BJ (cell line): ENCODE measurements at regions of chr4 and their contacts with region 1.

Region 1: DNA sequence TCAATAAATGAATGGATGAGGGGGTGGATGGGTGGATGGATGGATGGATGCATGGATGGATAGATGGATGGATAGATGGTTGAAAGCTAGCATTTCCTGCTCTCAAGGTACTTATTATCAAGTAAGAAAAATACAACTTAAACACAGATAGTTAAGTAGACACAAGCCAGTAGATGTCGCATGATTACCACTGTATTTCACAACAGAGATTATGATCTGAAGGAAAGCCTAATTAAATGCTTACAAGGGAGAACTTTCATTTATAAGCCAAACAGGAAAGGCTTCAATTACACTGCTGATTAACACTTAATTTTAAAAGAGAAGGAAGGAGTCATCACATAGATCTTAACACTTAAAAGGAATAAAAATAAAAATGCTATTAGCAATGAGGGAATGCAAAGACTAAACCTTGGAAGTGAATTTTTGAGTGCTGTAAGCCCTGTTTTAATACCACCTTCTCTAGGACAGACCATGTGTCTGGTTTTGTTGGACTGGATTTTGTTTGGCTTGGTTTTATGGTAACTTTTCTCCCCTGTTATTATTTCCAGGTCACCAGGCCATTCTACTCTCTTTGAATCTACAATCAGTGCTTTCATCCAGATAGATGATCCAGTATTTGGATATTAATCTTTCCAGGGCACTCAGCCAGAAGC is 75.4 kb upstream of the SLC39A8 start:
- DNase-seq: no peak
- H3K4me3 ChIP-seq: no peak overlapping the region
- H3K27me3 ChIP-seq: no peaks in the 10 kb centered on the region
- CTCF ChIP-seq: peak; percentile 33

Region 2: DNA sequence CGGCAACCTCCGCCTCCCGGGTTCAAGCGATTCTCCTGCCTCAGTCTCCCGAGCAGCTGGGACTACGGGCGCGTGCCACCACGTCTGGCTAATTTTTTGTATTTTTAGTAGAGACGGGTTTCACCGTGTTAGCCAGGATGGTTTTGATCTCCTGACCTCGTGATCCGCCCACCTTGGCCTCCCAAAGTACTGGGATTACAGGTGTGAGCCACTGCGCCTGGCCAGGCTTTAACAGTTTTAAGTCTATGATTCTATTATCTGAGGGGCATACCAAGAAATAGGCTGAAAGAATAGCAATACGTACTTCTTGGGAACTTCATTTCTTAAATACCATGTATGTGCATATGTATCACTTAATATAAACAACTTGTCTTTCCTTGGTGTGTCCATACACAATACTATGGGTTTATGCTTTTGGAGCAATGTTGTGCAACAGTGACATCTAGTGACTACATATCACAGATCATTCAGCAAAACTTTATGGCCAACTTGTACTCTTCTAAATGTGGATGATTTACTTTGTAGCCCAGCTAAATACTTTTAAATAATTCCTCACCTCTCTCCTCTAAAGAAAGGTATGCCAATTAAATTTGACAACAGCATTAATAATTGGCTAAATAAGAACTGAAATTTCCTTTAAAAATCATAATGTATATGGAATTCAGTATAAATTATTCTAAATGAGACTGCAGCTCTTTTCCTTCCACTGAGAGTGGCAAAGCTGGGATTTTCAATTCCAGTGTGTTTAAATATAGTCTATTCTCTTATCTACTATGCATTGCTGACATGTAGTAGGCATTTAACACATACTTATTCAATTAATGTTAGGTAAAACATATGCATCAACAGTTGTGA is 588.4 kb after region 1 on chr4:
- CTCF ChIA-PET with region 1: interaction called, 11 read pairs
- POLR2A ChIA-PET with region 1: no interaction called
- DNase-seq: peak; percentile 20
- H3K4me3 ChIP-seq: no peak overlapping the region
- H3K27me3 ChIP-seq: no peaks in the 10 kb centered on the region
- CTCF ChIP-seq: peak; percentile 65